Naive thymus-derived CD4-positive, alpha-beta T cell (primary cell): ENCODE measurements at regions of chr2 and their contacts with region 1.

Region 1: DNA sequence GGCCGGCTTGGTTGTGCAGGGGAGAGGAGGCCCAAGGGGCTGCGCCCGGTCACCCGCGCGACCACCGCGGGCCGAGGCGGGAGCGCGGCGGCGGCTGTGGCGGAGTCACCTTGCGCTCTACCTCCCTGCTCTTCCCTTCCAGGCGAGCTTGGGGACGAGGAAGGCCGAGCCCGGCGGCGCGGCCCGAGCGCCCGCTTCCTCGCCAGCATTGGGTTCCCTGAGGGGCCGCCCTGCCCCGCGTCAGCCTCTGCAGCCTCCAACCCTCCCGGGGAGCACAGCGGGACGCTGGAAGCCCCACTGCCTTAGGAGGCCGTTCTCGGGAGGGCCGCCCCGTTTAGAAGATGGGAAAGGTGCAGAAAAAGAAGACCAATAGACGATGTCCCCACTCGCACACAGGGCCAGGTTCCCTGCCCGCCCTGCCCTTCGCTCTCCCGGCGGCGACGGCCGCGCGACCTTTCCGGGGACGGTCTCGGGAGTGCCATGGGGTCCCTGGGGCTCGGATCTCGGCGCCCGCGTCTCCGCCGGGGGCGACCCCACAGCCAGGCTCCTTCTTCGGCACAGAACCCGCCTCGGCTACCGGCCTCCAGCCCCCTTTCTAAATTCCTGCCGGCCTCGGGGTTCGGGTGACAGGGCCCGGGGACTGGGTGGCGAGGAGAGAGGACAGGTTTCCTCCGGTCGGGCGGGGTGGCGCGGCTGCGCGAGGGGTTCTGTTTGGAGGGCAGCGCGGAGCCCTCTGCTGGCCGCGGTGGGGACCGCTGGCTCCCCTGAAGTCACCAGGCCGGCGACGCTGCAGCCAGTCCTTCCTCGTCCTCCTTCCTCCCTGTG is 85.5 kb downstream of the HS6ST1 start:
- DNase-seq: peak; percentile 54 to 86 (median 74)
- ATAC-seq: peak; percentile 98
- H3K4me3 ChIP-seq: peak overlapping the region; percentile 70
- H3K4me3 Mint-ChIP-seq: peak overlapping the region; percentile 74 to 94 (median 86)
- H3K27ac ChIP-seq: peak overlapping the region; percentile 36
- H3K27ac Mint-ChIP-seq: peak overlapping the region in 1 of 9 donors; percentile 81
- H3K4me1 ChIP-seq: no peaks in the 10 kb centered on the region
- H3K4me1 Mint-ChIP-seq: peaks cover 0 to 6% (median 4%) of the 10 kb centered on the region in 7 donors
- H3K27me3 ChIP-seq: no peaks in the 10 kb centered on the region
- H3K27me3 Mint-ChIP-seq: peaks cover 0 to 21% (median 3%) of the 10 kb centered on the region in 5 donors

Region 2: GRCh38 chr2:127884436-127885345 is 348.5 kb before region 1 on chr2:
- CTCF ChIA-PET with region 1: no interaction called
- POLR2A ChIA-PET with region 1: no interaction called
- intact Hi-C with region 1: loop called in 1 of 2 experiments (anchors 2 kb)
- DNase-seq: peak in 1 of 9 donors; percentile 7
- ATAC-seq: no peak
- H3K4me3 ChIP-seq: peak overlapping the region; percentile 43
- H3K4me3 Mint-ChIP-seq: peak overlapping the region; percentile 78 to 100 (median 92)
- H3K27ac ChIP-seq: peak overlapping the region; percentile 55
- H3K27ac Mint-ChIP-seq: peak overlapping the region; percentile 75 to 94 (median 89)
- H3K4me1 ChIP-seq: peaks cover 15 to 24% of the 10 kb centered on the region in 2 donors
- H3K4me1 Mint-ChIP-seq: peaks cover 36 to 73% (median 66%) of the 10 kb centered on the region in 7 donors
- H3K27me3 ChIP-seq: no peaks in the 10 kb centered on the region
- H3K27me3 Mint-ChIP-seq: no peaks in the 10 kb centered on the region

Region 3: GRCh38 chr2:127891811-127892210 is 341.4 kb before region 1 on chr2:
- CTCF ChIA-PET with region 1: no interaction called
- POLR2A ChIA-PET with region 1: no interaction called
- intact Hi-C with region 1: loop called (anchors 2 to 10 kb)
- DNase-seq: no peak
- ATAC-seq: no peak
- H3K4me3 ChIP-seq: no peak overlapping the region
- H3K4me3 Mint-ChIP-seq: peak overlapping the region in 1 of 10 donors; percentile 6
- H3K27ac ChIP-seq: no peak overlapping the region
- H3K27ac Mint-ChIP-seq: peak overlapping the region in 2 of 9 donors; percentile 47 to 57
- H3K4me1 ChIP-seq: peaks cover 5 to 17% of the 10 kb centered on the region in 2 donors
- H3K4me1 Mint-ChIP-seq: peaks cover 16 to 38% (median 32%) of the 10 kb centered on the region in 7 donors
- H3K27me3 ChIP-seq: no peaks in the 10 kb centered on the region
- H3K27me3 Mint-ChIP-seq: peaks cover 0 to 3% (median 0%) of the 10 kb centered on the region in 5 donors

Region 4: GRCh38 chr2:128062571-128062970 is 170.6 kb before region 1 on chr2:
- CTCF ChIA-PET with region 1: no interaction called
- POLR2A ChIA-PET with region 1: no interaction called
- intact Hi-C with region 1: loop called in 1 of 2 experiments (anchors 1 kb)
- DNase-seq: no peak
- ATAC-seq: no peak
- H3K4me3 ChIP-seq: no peak overlapping the region
- H3K4me3 Mint-ChIP-seq: no peak overlapping the region
- H3K27ac ChIP-seq: no peak overlapping the region
- H3K27ac Mint-ChIP-seq: no peak overlapping the region
- H3K4me1 ChIP-seq: no peaks in the 10 kb centered on the region
- H3K4me1 Mint-ChIP-seq: no peaks in the 10 kb centered on the region
- H3K27me3 ChIP-seq: no peaks in the 10 kb centered on the region
- H3K27me3 Mint-ChIP-seq: peaks cover 0 to under 1% (median 0%) of the 10 kb centered on the region in 5 donors

Region 5: DNA sequence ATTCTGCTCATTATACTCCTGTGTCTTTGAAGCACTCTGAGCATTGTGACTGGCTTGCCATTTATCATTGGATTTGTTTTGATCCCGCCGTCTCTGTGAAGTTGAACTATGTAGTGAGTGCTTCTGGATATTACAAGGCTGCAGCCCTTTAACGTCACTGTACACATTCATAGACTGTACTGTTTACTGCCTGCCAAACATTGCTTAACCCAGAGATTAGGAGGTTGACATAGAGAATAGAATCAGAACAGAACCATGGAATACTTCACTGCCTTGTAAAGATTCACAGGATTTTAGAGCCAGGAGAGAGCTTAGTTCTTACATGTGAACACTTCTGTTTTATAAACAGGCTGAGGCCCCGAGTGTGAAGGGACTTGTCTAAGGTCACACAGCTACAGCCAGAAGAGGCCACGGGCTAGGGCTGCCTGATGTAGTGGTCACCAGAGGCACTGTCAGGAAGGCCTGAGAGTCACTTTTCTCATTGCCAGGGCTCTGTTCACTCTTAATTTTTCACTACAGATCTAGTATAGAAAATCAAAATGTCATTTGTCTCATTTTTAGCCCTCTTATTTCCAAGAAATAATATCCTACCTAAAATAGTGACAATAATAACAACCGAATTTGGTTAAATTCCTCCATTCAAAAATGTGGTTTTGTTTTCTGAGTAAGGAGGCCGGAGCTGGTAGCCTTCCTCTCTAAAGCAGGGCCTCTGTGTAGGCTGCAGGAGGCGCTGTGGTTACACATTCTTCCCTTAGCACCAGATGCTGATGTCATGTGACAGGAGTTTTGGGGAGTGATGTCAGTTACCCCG is 54.3 kb before region 1 on chr2:
- CTCF ChIA-PET with region 1: interaction called, 3 read pairs
- POLR2A ChIA-PET with region 1: no interaction called
- intact Hi-C with region 1: loop called (anchors 1 kb)
- DNase-seq: peak in 8 of 9 donors; percentile 19 to 53 (median 36)
- ATAC-seq: peak; percentile 92
- H3K4me3 ChIP-seq: no peak overlapping the region
- H3K4me3 Mint-ChIP-seq: no peak overlapping the region
- H3K27ac ChIP-seq: no peak overlapping the region
- H3K27ac Mint-ChIP-seq: no peak overlapping the region
- H3K4me1 ChIP-seq: no peaks in the 10 kb centered on the region
- H3K4me1 Mint-ChIP-seq: peaks cover 0 to 8% (median 0%) of the 10 kb centered on the region in 7 donors
- H3K27me3 ChIP-seq: no peaks in the 10 kb centered on the region
- H3K27me3 Mint-ChIP-seq: no peaks in the 10 kb centered on the region

Region 6: GRCh38 chr2:128196471-128196931 is 36.7 kb before region 1 on chr2:
- CTCF ChIA-PET with region 1: no interaction called
- POLR2A ChIA-PET with region 1: no interaction called
- intact Hi-C with region 1: loop called in 1 of 2 experiments (anchors 2 kb)
- DNase-seq: no peak
- ATAC-seq: peak; percentile 40
- H3K4me3 ChIP-seq: no peak overlapping the region
- H3K4me3 Mint-ChIP-seq: peak overlapping the region; percentile 6 to 66 (median 54)
- H3K27ac ChIP-seq: no peak overlapping the region
- H3K27ac Mint-ChIP-seq: peak overlapping the region; percentile 29 to 88 (median 63)
- H3K4me1 ChIP-seq: peaks cover 3 to 22% of the 10 kb centered on the region in 2 donors
- H3K4me1 Mint-ChIP-seq: peaks cover 24 to 41% (median 30%) of the 10 kb centered on the region in 7 donors
- H3K27me3 ChIP-seq: no peaks in the 10 kb centered on the region
- H3K27me3 Mint-ChIP-seq: no peaks in the 10 kb centered on the region

Region 7: GRCh38 chr2:128282976-128283810 is 50.0 kb after region 1 on chr2:
- CTCF ChIA-PET with region 1: no interaction called
- POLR2A ChIA-PET with region 1: no interaction called
- intact Hi-C with region 1: no loop called
- DNase-seq: no peak
- ATAC-seq: no peak
- H3K4me3 ChIP-seq: no peak overlapping the region
- H3K4me3 Mint-ChIP-seq: no peak overlapping the region
- H3K27ac ChIP-seq: no peak overlapping the region
- H3K27ac Mint-ChIP-seq: no peak overlapping the region
- H3K4me1 ChIP-seq: peaks cover 4 to 5% of the 10 kb centered on the region in 2 donors
- H3K4me1 Mint-ChIP-seq: peaks cover 6 to 28% (median 18%) of the 10 kb centered on the region in 7 donors
- H3K27me3 ChIP-seq: no peaks in the 10 kb centered on the region
- H3K27me3 Mint-ChIP-seq: no peaks in the 10 kb centered on the region

Region 8: GRCh38 chr2:130019402-130019801 is 1786.2 kb after region 1 on chr2:
- CTCF ChIA-PET with region 1: no interaction called
- POLR2A ChIA-PET with region 1: no interaction called
- intact Hi-C with region 1: no loop called
- DNase-seq: no peak
- ATAC-seq: no peak
- H3K4me3 ChIP-seq: no peak overlapping the region
- H3K4me3 Mint-ChIP-seq: no peak overlapping the region
- H3K27ac ChIP-seq: no peak overlapping the region
- H3K27ac Mint-ChIP-seq: no peak overlapping the region
- H3K4me1 ChIP-seq: no peaks in the 10 kb centered on the region
- H3K4me1 Mint-ChIP-seq: no peaks in the 10 kb centered on the region
- H3K27me3 ChIP-seq: no peaks in the 10 kb centered on the region
- H3K27me3 Mint-ChIP-seq: peaks cover 0 to 27% (median 22%) of the 10 kb centered on the region in 5 donors